ENCODE measurements at regions of chr1 and their contacts with region 1.

Region 1: GRCh38 chr1:32773018-32773763 is 44.0 kb downstream of the YARS1 start:
- DNase-seq: peak; percentile 86
- ATAC-seq: peak; percentile 82
- H3K4me3 Mint-ChIP-seq: no peak overlapping the region
- H3K27ac Mint-ChIP-seq: peak overlapping the region; percentile 19
- H3K4me1 Mint-ChIP-seq: peaks cover 16% of the 10 kb centered on the region
- H3K27me3 Mint-ChIP-seq: no peaks in the 10 kb centered on the region
- CTCF ChIP-seq: peak; percentile 92

Region 2: GRCh38 chr1:32709075-32709474 is 64.1 kb before region 1 on chr1:
- CTCF ChIA-PET with region 1: interaction called, 197 read pairs
- POLR2A ChIA-PET with region 1: interaction called, 11 read pairs
- intact Hi-C with region 1: loop called (anchors 2 kb)
- DNase-seq: no peak
- ATAC-seq: no peak
- H3K4me3 Mint-ChIP-seq: no peak overlapping the region
- H3K27ac Mint-ChIP-seq: no peak overlapping the region
- H3K4me1 Mint-ChIP-seq: no peaks in the 10 kb centered on the region
- H3K27me3 Mint-ChIP-seq: peaks cover 11% of the 10 kb centered on the region
- CTCF ChIP-seq: no peak

Region 3: DNA sequence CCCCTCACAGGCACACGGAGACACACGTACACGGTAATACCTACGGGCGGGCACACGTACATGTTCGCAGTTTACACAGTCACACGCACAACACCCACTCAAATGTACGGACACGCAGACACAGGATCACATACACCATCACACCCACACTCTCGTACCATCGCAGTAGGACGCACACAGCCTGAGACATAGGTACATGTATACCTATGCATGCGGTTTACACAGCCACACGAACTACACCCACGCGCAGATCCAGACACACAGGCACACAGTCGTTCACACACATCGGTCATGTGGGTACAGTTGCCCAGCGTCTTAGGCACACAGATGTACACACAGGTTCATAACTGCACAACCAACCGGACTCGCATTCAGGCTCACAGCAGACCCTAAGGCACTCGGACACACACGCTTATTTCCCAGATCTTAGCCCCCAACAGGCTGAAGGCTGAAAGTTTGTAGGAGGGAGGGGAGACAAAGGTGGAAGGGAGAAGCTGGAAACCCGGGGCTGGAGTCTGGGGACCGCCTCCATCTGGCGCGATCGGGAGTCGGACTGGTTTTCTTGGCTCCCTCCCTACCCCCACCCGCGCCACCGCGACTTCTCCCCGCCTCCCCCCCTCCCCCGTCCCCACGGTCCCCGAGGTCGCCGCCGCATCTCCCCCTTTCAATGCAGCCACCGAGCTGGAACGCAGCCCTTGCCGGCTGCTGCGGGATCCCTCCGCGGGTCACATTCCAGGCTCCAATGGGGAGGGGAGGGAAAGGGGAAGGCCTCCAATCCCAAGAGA is 18.7 kb before region 1 on chr1:
- CTCF ChIA-PET with region 1: interaction called, 12 read pairs
- POLR2A ChIA-PET with region 1: interaction called, 8 read pairs
- intact Hi-C with region 1: no loop called
- DNase-seq: peak; percentile 84
- ATAC-seq: peak; percentile 75
- H3K4me3 Mint-ChIP-seq: peak overlapping the region; percentile 39
- H3K27ac Mint-ChIP-seq: no peak overlapping the region
- H3K4me1 Mint-ChIP-seq: peaks cover 16% of the 10 kb centered on the region
- H3K27me3 Mint-ChIP-seq: peaks cover 4% of the 10 kb centered on the region
- CTCF ChIP-seq: no peak

Region 4: DNA sequence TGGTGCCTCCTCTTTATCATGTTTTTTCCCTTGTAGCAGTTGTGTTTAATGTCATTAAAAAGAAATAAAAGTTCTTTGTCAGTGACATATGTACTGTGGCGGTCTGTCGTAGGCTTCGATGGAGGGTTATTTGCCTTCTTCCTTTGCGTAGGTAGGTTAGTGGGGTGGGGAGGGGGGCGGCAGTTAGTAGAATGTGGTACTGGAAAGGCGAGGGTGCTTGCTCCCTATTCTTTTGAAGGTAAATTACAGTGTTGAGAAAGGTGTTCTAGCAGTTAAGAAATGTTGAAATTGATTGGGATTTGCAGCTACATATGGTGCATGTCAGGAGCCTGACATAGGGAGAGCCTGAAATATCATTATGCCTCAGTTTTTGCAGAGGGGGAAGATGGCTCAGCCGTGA is 85.6 kb after region 1 on chr1:
- CTCF ChIA-PET with region 1: no interaction called
- POLR2A ChIA-PET with region 1: no interaction called
- intact Hi-C with region 1: no loop called
- DNase-seq: no peak
- ATAC-seq: no peak
- H3K4me3 Mint-ChIP-seq: no peak overlapping the region
- H3K27ac Mint-ChIP-seq: no peak overlapping the region
- H3K4me1 Mint-ChIP-seq: no peaks in the 10 kb centered on the region
- H3K27me3 Mint-ChIP-seq: no peaks in the 10 kb centered on the region
- CTCF ChIP-seq: no peak

Region 5: DNA sequence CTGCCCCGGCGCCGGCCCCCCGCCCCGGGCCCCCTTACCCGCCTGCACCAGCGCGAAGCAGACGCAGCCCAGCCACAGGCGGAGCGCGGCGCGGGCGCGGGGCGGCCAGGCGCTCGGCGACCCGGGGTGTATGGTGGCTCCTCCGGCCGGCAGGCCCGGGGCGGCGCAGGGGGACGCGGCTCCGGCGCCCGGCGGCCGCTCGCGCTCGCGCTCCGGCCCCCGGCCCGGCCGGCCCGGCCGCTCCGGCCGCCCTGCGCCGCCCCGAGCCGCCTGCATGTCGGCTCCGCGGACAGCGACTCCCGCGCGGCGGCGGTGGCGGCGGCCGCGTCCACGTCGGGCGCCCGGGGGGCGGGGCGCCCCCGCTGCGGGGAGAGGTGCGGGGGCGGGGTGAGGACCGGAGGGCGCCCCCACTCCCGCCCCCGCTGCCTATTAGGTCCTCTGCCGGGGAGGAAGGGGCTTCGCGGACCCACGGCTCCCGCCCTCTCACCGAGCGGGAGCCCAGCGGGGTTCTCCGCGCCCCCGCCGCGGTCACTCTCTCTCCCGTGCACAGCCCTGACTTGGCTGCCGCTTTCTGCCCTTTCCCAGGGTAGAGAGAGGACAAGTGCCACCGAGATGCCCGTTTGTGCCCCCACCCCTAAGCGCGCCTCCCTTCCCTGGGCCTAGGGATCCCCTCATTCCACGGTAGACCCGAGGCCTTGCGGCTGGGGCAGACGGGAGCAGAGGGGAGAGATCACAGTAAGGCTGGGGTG is 97.6 kb after region 1 on chr1 and contains the start of gene FNDC5:
- CTCF ChIA-PET with region 1: interaction called, 17 read pairs
- POLR2A ChIA-PET with region 1: interaction called, 3 read pairs
- intact Hi-C with region 1: no loop called
- DNase-seq: no peak
- ATAC-seq: peak; percentile 4
- H3K4me3 Mint-ChIP-seq: peak within 1 kb of the TSS; percentile 28
- H3K27ac Mint-ChIP-seq: no peak within 1 kb of the TSS
- H3K4me1 Mint-ChIP-seq: peaks cover 8% of the 10 kb centered on the region
- H3K27me3 Mint-ChIP-seq: peaks cover 41% of the 10 kb centered on the region
- CTCF ChIP-seq: no peak
- total RNA-seq, gene FNDC5: not detected